Right cardiac atrium (tissue), 5 donors: ENCODE measurements at regions of chr15 and their contacts with region 1.

Region 1: DNA sequence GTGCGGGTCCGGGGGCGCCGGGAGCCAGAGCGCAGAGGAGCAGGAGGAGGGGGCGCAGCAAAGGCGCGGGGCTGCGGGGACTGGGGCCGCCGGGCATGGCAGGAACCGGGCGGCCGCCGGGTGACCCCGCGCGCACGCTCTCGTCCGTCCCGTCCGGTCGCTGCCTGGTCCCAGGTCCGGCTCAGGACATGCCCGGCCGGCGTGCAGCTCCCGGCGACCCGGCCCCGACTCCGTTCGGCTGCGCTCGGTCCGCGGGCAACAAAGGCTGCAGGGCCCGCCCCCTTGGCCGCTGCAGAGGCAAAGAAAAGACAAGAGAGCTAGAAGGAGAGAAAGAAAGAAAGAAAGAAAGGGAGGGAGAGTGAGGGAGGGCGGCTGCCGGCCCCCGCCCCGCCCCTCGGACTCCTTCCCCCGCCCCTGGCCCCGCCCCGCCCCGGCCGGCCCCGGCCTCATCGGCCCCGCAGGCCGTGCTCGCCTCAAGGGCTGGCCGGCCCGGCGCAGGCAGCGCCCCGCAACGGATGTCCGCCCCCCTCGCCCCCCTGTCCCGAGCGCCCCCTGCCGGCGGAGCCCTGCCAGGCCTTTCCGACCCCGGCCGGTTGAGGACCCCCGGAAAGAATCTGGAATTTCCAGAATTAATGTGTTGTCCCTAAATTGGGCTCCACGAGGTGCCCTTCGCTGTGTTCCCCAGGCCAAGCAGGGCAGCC is at the start of gene ADAMTS7:
- DNase-seq: peak; percentile 83 to 94 (median 93)
- ATAC-seq: peak; percentile 88 to 90
- H3K4me3 ChIP-seq: peak within 1 kb of the TSS; percentile 65
- H3K27ac ChIP-seq: peak within 1 kb of the TSS; percentile 76
- H3K4me1 ChIP-seq: peaks cover 5% of the 10 kb centered on the region
- H3K27me3 ChIP-seq: no peaks in the 10 kb centered on the region
- total RNA-seq, gene ADAMTS7: 38.8 to 85.9 (median 82.0) TPM

Region 2: DNA sequence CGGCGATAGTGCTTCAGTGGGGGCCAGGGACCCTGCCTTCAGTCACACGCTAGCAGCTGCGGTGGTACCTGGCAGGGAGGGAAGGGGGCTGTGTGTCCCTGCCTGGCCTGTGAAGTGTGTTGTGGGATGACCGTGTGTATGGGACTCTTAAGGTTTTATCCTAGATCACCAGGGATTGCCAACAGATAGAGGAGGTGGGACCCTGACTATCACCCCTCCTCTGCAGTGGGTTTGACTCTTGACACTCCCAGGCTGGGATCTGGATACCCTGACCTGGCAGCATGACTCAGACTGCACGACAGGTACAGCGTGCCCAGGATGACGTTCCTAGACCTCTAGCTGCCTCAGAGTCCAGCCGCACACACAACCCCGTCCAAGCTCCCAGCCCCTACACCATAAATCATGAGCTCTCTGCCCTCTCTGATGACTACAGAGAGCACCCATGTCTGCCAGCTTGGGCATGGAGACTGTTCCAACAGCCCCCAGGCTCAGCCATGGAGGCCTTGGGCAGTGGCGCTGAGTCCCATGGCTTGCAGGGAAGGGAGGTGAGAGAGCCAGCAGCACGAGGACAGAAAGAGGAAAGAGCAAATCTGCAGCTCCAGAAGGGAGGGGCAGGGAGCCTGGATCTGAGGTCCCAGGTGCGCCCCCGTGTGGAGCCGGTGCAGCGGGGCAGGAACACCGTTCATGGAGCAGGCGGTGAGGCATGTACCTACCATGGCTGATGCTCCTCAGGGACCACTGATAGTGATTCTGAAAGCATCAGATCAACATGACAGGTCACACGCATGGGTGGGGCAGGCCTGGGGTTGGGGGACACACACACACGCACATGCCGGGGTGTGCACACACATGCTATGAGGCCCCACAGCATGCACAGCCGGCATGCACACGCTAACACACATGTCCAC is 71.0 kb before region 1 on chr15:
- intact Hi-C with region 1: no loop called
- DNase-seq: peak in 2 of 3 donors; percentile 69 to 71
- ATAC-seq: peak; percentile 33 to 35
- H3K4me3 ChIP-seq: no peak overlapping the region
- H3K27ac ChIP-seq: no peak overlapping the region
- H3K4me1 ChIP-seq: no peaks in the 10 kb centered on the region
- H3K27me3 ChIP-seq: no peaks in the 10 kb centered on the region

Region 3: GRCh38 chr15:78767331-78767951 is 43.8 kb before region 1 on chr15:
- intact Hi-C with region 1: loop called in 1 of 4 experiments (anchors 10 kb)
- DNase-seq: peak in 2 of 3 donors; percentile 54 to 56
- ATAC-seq: no peak
- H3K4me3 ChIP-seq: no peak overlapping the region
- H3K27ac ChIP-seq: no peak overlapping the region
- H3K4me1 ChIP-seq: peaks cover 2% of the 10 kb centered on the region
- H3K27me3 ChIP-seq: no peaks in the 10 kb centered on the region

Region 4: GRCh38 chr15:78872972-78873792 is 61.9 kb after region 1 on chr15:
- intact Hi-C with region 1: loop called in 2 of 4 experiments (anchors 10 kb)
- DNase-seq: peak; percentile 87 to 95 (median 93)
- ATAC-seq: peak; percentile 84 to 87
- H3K4me3 ChIP-seq: peak overlapping the region; percentile 91
- H3K27ac ChIP-seq: peak overlapping the region; percentile 100
- H3K4me1 ChIP-seq: peaks cover 10% of the 10 kb centered on the region
- H3K27me3 ChIP-seq: no peaks in the 10 kb centered on the region